Activated CD8-positive, alpha-beta T cell treated with anti-CD3 and anti-CD28 coated beads for 36 hours (primary cell): ENCODE measurements at regions of chr6 and their contacts with region 1.

Region 1: GRCh38 chr6:26553635-26554446 is 15.7 kb downstream of the HMGN4 start:
- DNase-seq: peak; percentile 92
- ATAC-seq: peak; percentile 50
- H3K4me3 Mint-ChIP-seq: no peak overlapping the region
- H3K27ac Mint-ChIP-seq: no peak overlapping the region
- H3K4me1 Mint-ChIP-seq: peaks cover 20% of the 10 kb centered on the region
- H3K27me3 Mint-ChIP-seq: no peaks in the 10 kb centered on the region
- CTCF ChIP-seq: no peak

Region 2: DNA sequence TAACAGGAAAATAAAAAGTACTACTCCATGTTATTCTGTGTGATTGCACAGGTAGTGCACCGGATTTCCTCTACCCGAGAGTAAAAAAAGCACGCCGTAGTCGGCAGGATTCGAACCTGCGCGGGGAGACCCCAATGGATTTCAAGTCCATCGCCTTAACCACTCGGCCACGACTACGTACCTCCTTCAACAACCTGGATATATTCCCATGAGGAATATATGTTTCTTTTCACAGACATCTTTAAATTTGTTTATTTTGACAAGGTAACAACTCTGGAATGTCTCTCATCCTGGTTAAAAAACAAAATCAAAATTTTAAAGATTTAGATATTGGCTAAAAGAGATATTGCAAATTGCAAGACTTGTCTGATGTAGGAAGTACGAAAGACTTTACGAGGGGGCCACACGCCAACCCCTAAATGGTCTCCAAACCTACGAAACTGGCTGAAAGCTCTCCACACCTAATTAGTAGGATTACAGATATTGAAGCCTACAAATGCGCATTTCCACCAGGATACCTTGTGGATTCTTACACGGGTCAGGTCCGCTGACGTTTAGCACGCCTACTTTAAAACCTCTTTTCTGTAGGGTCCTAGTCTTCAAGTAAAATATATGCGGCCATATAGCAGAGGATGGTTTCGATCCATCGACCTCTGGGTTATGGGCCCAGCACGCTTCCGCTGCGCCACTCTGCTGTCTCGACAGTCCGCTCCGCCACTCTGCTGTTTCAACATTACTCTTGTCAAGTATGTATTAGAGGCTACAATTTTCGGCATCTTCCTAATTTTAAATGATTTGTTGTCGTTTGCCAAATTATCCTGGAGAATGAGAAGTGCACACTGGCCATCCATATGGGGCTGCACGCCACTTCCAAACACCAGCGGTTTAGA is 241.1 kb before region 1 on chr6:
- CTCF ChIA-PET with region 1: no interaction called
- POLR2A ChIA-PET with region 1: no interaction called
- intact Hi-C with region 1: loop called (anchors 5 kb)
- DNase-seq: peak; percentile 92
- ATAC-seq: peak; percentile 74
- H3K4me3 Mint-ChIP-seq: peak overlapping the region; percentile 84
- H3K27ac Mint-ChIP-seq: peak overlapping the region; percentile 93
- H3K4me1 Mint-ChIP-seq: peaks cover 33% of the 10 kb centered on the region
- H3K27me3 Mint-ChIP-seq: no peaks in the 10 kb centered on the region
- CTCF ChIP-seq: no peak

Region 3: DNA sequence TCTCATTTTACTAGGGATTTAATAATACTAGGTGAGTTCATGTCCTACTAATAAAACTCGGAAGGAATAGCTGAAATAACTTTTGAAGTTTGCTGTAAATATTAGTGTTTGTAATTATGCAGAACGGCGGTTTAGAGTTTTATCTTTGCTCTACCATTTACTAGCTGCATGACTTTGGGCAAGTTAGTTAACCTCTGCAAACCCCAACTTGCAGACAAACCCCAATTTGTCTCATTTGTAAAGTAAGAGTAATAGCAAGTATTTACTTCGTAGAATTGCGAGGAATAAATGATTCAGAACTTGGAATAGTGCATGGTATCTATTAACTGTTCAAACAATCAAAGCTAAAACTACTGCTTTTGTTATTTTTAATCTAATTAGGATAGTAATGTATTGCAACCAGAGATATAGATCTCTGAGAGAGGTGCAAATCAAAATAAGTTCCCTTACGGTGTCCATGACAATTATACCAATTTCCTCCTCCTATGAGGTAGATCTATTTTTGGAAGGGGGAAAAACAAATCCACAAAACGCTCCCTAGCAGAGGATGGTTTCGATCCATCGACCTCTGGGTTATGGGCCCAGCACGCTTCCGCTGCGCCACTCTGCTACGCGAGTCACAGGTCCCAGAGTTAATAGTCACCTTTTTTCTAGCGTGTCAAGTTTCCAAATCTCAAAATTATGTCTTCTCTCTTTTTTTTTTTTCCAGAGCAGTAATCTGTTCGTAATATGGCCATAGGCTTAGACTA is 223.9 kb before region 1 on chr6:
- CTCF ChIA-PET with region 1: interaction called, 5 read pairs
- POLR2A ChIA-PET with region 1: no interaction called
- intact Hi-C with region 1: loop called (anchors 5 kb)
- DNase-seq: peak; percentile 71
- ATAC-seq: peak; percentile 31
- H3K4me3 Mint-ChIP-seq: peak overlapping the region; percentile 81
- H3K27ac Mint-ChIP-seq: peak overlapping the region; percentile 87
- H3K4me1 Mint-ChIP-seq: peaks cover 38% of the 10 kb centered on the region
- H3K27me3 Mint-ChIP-seq: peaks cover 19% of the 10 kb centered on the region
- CTCF ChIP-seq: no peak

Region 4: GRCh38 chr6:26537846-26538571 is 15.8 kb before region 1 on chr6 and contains the start of gene HMGN4:
- CTCF ChIA-PET with region 1: interaction called, 17 read pairs
- POLR2A ChIA-PET with region 1: interaction called, 20 read pairs
- intact Hi-C with region 1: loop called (anchors 2 kb)
- DNase-seq: peak; percentile 85
- ATAC-seq: peak; percentile 57
- H3K4me3 Mint-ChIP-seq: peak within 1 kb of the TSS; percentile 95
- H3K27ac Mint-ChIP-seq: peak within 1 kb of the TSS; percentile 99
- H3K4me1 Mint-ChIP-seq: peaks cover 49% of the 10 kb centered on the region
- H3K27me3 Mint-ChIP-seq: peaks cover 1% of the 10 kb centered on the region
- CTCF ChIP-seq: no peak
- total RNA-seq, gene HMGN4: 80.2 to 83.3 TPM

Region 5: GRCh38 chr6:26568601-26569432 is 15.0 kb after region 1 on chr6:
- CTCF ChIA-PET with region 1: interaction called, 13 read pairs
- POLR2A ChIA-PET with region 1: interaction called, 13 read pairs
- intact Hi-C with region 1: loop called (anchors 1 kb)
- DNase-seq: peak; percentile 95
- ATAC-seq: peak; percentile 75
- H3K4me3 Mint-ChIP-seq: peak overlapping the region; percentile 89
- H3K27ac Mint-ChIP-seq: peak overlapping the region; percentile 88
- H3K4me1 Mint-ChIP-seq: peaks cover 23% of the 10 kb centered on the region
- H3K27me3 Mint-ChIP-seq: peaks cover 3% of the 10 kb centered on the region
- CTCF ChIP-seq: peak; percentile 43

Region 6: DNA sequence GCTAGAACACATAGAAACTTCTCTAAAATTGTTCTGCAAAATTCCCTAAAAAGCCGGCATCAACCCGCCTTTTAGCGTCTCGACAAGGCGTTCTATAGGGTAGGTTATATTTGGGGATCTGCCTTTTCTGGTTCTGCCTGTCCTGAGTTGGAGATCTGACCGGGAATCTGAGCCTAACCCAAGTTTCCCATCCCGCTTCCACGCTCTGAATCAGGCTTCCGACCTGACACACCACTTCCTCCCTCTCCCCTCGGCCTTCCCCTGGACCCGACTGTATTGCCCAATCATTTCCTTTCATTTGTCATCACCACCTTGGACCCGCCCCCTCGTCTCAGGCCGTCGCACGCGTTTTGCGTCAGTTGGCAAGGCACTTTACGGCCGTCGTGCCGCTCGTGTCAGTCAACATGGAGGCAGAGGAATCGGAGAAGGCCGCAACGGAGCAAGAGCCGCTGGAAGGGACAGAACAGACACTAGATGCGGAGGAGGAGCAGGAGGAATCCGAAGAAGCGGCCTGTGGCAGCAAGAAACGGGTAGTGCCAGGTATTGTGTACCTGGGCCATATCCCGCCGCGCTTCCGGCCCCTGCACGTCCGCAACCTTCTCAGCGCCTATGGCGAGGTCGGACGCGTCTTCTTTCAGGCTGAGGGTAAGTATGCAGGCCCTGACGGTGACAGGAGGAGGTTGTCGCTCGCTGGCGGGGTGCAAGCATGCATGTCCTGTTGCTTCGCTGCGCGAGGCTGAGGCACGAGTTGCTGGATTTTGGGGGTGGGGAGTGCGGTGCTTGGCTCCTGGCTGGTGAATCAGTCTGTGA is 42.9 kb after region 1 on chr6 and contains the start of gene ABT1:
- CTCF ChIA-PET with region 1: interaction called, 22 read pairs
- POLR2A ChIA-PET with region 1: interaction called, 6 read pairs
- intact Hi-C with region 1: no loop called
- DNase-seq: peak; percentile 98
- ATAC-seq: peak; percentile 77
- H3K4me3 Mint-ChIP-seq: no peak within 1 kb of the TSS
- H3K27ac Mint-ChIP-seq: no peak within 1 kb of the TSS
- H3K4me1 Mint-ChIP-seq: peaks cover 40% of the 10 kb centered on the region
- H3K27me3 Mint-ChIP-seq: peaks cover 14% of the 10 kb centered on the region
- CTCF ChIP-seq: no peak
- total RNA-seq, gene ABT1: 27.7 to 27.9 TPM